ENCODE measurements at regions of chr6 and their contacts with region 1.

Region 1: DNA sequence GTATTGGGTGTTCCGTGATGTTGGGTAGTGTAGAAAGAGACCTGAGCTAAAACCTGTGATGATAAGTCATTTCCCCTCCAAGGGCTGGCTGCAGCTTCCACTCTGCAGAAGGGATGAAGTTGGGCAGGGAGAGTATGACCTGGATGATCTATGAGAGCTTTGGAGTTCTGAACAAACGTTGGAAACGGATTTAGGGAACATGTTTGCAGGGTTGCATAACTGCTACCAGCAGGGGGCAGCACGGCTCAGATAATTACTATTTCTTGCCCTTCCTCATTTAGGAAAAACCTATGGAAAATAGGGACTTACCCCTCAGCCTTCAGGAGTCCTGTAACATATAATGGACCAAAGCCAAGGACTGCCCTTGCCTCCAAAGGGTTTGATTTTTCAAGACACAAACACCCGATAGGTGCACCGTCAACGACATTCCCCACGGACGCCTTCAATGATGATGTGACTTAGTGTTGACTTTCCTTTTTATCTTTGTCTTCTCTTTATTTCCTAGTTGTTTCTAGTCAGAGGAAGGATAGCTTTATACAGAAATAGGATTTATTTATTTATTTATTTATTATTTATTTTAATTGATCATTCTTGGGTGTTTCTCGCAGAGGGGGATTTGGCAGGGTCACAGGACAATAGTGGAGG is 164.9 kb upstream of the SASH1 start:
- DNase-seq: peak; percentile 68
- ATAC-seq: peak; percentile 59
- H3K4me3 ChIP-seq: no peak overlapping the region
- H3K27ac ChIP-seq: no peak overlapping the region
- H3K4me1 ChIP-seq: no peaks in the 10 kb centered on the region
- H3K27me3 ChIP-seq: no peaks in the 10 kb centered on the region
- CTCF ChIP-seq: peak; percentile 77
- POLR2A ChIP-seq: no peak
- RAD21 ChIP-seq: peak; percentile 82

Region 2: DNA sequence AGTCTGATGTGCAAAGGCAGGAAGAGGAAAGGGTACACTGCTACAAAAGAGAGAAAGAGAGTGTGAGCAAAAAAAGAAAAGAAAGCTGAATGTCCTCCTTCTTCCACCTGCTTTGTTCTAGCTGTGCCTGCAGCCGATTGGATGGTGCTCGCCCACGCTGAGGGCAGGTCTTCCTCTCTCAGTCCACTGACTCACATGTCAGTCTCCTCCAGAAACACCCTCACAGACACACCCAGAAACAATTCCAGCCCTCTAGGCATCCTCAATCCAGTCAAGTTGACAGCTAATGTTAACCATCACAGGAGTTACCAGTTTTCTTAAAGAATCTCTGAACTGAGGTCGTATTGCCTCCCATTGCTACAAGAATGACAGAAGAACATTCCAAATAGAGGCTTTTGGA is 247.0 kb before region 1 on chr6:
- CTCF ChIA-PET with region 1: no interaction called
- POLR2A ChIA-PET with region 1: no interaction called
- dilution Hi-C with region 1: no loop called
- in situ Hi-C with region 1: no loop called
- intact Hi-C with region 1: no loop called
- DNase-seq: no peak
- ATAC-seq: no peak
- H3K4me3 ChIP-seq: no peak overlapping the region
- H3K27ac ChIP-seq: no peak overlapping the region
- H3K4me1 ChIP-seq: no peaks in the 10 kb centered on the region
- H3K27me3 ChIP-seq: no peaks in the 10 kb centered on the region; the same call in 1 of the 2 replicates
- CTCF ChIP-seq: no peak
- POLR2A ChIP-seq: no peak
- RAD21 ChIP-seq: no peak

Region 3: DNA sequence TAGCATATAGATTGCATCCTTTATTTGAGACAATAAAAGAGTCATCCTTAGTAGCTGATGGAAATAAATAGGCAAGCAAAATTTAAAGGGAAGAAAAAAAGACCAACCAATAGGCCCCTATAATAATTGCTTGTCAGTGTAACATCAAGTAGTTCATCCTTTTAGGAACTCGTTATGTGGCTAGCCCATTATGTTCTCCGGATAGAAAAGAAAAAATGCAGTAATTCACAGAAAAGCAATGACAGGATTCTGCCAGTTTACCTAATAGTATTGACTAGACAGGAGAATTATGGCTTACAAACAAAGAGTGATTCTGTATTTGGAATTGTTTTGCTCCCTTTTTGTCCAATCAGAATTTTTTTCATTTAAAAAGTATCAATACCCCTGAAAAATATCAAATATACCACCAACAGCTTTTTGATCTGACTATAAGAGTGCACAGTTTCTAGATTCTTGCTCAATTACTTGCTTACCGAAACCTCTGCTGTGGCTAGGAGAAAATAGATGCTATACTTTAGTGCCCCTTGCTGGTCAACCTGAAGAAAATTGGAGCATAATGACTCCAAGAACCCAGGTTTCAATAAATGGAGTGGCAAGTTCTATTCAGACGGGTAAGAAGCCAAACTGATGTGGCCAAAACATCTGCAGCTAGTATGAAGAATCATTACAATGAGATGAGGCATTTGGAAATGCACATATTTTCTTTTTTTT is 73.4 kb after region 1 on chr6:
- CTCF ChIA-PET with region 1: interaction called, 12 read pairs
- POLR2A ChIA-PET with region 1: no interaction called
- dilution Hi-C with region 1: no loop called
- in situ Hi-C with region 1: no loop called
- intact Hi-C with region 1: loop called (anchors 1 kb)
- DNase-seq: peak; percentile 80
- ATAC-seq: peak; percentile 86
- H3K4me3 ChIP-seq: no peak overlapping the region
- H3K27ac ChIP-seq: no peak overlapping the region
- H3K4me1 ChIP-seq: peaks cover 2% of the 10 kb centered on the region; the same call in 1 of the 2 replicates
- H3K27me3 ChIP-seq: no peaks in the 10 kb centered on the region
- CTCF ChIP-seq: peak; percentile 62
- POLR2A ChIP-seq: no peak
- RAD21 ChIP-seq: peak; percentile 82

Region 4: GRCh38 chr6:148263010-148263409 is 85.3 kb after region 1 on chr6:
- CTCF ChIA-PET with region 1: no interaction called
- POLR2A ChIA-PET with region 1: no interaction called
- dilution Hi-C with region 1: no loop called
- in situ Hi-C with region 1: no loop called
- intact Hi-C with region 1: no loop called
- DNase-seq: no peak
- ATAC-seq: no peak
- H3K4me3 ChIP-seq: no peak overlapping the region
- H3K27ac ChIP-seq: no peak overlapping the region
- H3K4me1 ChIP-seq: peaks cover 9% of the 10 kb centered on the region
- H3K27me3 ChIP-seq: no peaks in the 10 kb centered on the region
- CTCF ChIP-seq: no peak
- POLR2A ChIP-seq: no peak
- RAD21 ChIP-seq: no peak

Region 5: DNA sequence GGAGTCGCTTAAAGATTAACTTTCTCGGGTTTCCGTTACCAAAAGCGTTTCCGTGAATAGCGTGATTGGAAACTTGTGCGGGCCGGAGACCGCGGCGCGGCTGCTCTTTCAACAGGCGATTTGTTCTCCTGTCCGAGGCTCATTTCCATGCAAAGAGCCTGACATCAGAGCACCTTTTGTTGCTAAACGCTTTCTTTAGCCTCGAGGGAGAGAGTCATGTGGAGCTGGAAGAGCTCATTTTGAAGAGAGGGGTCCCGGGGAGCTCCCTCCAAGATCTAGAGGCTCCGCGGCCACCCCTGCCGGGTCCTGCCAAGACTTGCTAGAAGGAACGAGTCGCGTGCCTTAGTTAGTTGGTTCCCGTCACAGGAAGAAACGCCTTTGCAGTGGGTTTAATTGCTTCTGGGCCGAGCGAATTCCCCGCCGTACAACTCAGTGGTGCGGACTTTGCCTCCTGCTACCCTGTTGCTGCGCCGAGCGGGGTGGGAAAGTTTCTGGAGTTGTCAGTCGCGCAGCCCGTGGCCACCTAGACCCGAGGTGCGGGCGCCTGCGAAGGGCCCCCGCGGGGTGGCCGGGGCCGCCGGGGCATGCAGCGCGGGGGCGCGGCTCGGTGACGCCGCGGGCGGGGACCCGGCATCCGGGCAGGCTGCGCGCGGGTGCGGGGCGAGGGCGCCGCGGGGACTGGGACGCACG is 164.8 kb after region 1 on chr6 and contains the start of gene SASH1:
- CTCF ChIA-PET with region 1: no interaction called
- POLR2A ChIA-PET with region 1: no interaction called
- dilution Hi-C with region 1: no loop called
- in situ Hi-C with region 1: no loop called
- intact Hi-C with region 1: loop called (anchors 5 kb)
- DNase-seq: peak; percentile 77
- ATAC-seq: peak; percentile 87
- H3K4me3 ChIP-seq: peak within 1 kb of the TSS; percentile 62
- H3K27ac ChIP-seq: peak within 1 kb of the TSS; percentile 95
- H3K4me1 ChIP-seq: peaks cover 4% of the 10 kb centered on the region; the same call in 1 of the 2 replicates
- H3K27me3 ChIP-seq: no peaks in the 10 kb centered on the region
- CTCF ChIP-seq: no peak
- POLR2A ChIP-seq: no peak
- RAD21 ChIP-seq: no peak
- total RNA-seq, gene SASH1: 16.5 and 20.3 TPM in 2 replicates

Region 6: GRCh38 chr6:148471624-148472159 is 294.0 kb after region 1 on chr6:
- CTCF ChIA-PET with region 1: interaction called, 3 read pairs
- POLR2A ChIA-PET with region 1: no interaction called
- dilution Hi-C with region 1: no loop called
- in situ Hi-C with region 1: loop called (anchors 5 kb)
- intact Hi-C with region 1: no loop called
- DNase-seq: peak; percentile 52
- ATAC-seq: peak; percentile 64; the same call in 1 of the 2 replicates
- H3K4me3 ChIP-seq: no peak overlapping the region
- H3K27ac ChIP-seq: no peak overlapping the region
- H3K4me1 ChIP-seq: peaks cover 2% of the 10 kb centered on the region; the same call in 1 of the 2 replicates
- H3K27me3 ChIP-seq: no peaks in the 10 kb centered on the region
- CTCF ChIP-seq: no peak
- POLR2A ChIP-seq: no peak
- RAD21 ChIP-seq: no peak

Region 7: GRCh38 chr6:148530394-148530953 is 352.8 kb after region 1 on chr6:
- CTCF ChIA-PET with region 1: interaction called, 3 read pairs
- POLR2A ChIA-PET with region 1: no interaction called
- dilution Hi-C with region 1: no loop called
- in situ Hi-C with region 1: no loop called
- intact Hi-C with region 1: loop called (anchors 2 kb)
- DNase-seq: peak; percentile 98
- ATAC-seq: peak; percentile 76
- H3K4me3 ChIP-seq: peak overlapping the region; percentile 46; the same call in 1 of the 2 replicates
- H3K27ac ChIP-seq: peak overlapping the region; percentile 80
- H3K4me1 ChIP-seq: peaks cover 30% of the 10 kb centered on the region
- H3K27me3 ChIP-seq: no peaks in the 10 kb centered on the region
- CTCF ChIP-seq: no peak
- POLR2A ChIP-seq: no peak; the same call in 1 of the 2 replicates
- RAD21 ChIP-seq: no peak

Measured in IMR-90 (cell line).